ENCODE measurements at regions of chr1 and their contacts with region 1.

Region 1: GRCh38 chr1:12677565-12677964 is 33.7 kb downstream of the AADACL4 start:
- DNase-seq: no peak
- H3K4me3 ChIP-seq: no peak overlapping the region
- H3K27ac ChIP-seq: no peak overlapping the region
- H3K4me1 ChIP-seq: no peaks in the 10 kb centered on the region
- H3K27me3 ChIP-seq: no peaks in the 10 kb centered on the region
- CTCF ChIP-seq: no peak

Region 2: GRCh38 chr1:11558871-11559590 is 1118.5 kb before region 1 on chr1:
- CTCF ChIA-PET with region 1: no interaction called
- POLR2A ChIA-PET with region 1: no interaction called
- intact Hi-C with region 1: no loop called
- DNase-seq: no peak
- H3K4me3 ChIP-seq: no peak overlapping the region
- H3K27ac ChIP-seq: no peak overlapping the region
- H3K4me1 ChIP-seq: no peaks in the 10 kb centered on the region
- H3K27me3 ChIP-seq: peaks cover 89% of the 10 kb centered on the region
- CTCF ChIP-seq: no peak

Region 3: DNA sequence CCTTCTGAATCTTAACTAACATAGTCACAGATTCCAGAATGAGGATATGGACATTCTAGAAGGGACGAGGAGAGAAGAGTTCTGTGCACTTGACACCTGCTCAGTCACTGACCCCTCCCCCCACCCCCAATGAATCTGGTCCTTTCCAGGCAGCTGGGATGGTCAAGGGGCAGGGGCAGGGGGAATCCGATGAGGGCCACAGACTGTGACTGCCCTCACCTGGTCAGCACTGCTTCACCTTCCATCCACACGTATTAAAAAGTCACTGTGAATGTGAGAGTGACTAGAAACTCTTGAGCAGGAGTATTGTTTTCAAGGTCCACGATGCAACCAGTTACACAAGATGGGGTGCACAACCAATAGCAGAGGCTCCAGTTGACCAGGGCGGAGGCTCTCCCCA is 86.5 kb after region 1 on chr1:
- CTCF ChIA-PET with region 1: interaction called, 13 read pairs
- POLR2A ChIA-PET with region 1: no interaction called
- intact Hi-C with region 1: no loop called
- DNase-seq: no peak
- H3K4me3 ChIP-seq: no peak overlapping the region
- H3K27ac ChIP-seq: no peak overlapping the region
- H3K4me1 ChIP-seq: no peaks in the 10 kb centered on the region
- H3K27me3 ChIP-seq: no peaks in the 10 kb centered on the region
- CTCF ChIP-seq: no peak